A549 (cell line): ENCODE measurements at regions of chr15 and their contacts with region 1.

Region 1: DNA sequence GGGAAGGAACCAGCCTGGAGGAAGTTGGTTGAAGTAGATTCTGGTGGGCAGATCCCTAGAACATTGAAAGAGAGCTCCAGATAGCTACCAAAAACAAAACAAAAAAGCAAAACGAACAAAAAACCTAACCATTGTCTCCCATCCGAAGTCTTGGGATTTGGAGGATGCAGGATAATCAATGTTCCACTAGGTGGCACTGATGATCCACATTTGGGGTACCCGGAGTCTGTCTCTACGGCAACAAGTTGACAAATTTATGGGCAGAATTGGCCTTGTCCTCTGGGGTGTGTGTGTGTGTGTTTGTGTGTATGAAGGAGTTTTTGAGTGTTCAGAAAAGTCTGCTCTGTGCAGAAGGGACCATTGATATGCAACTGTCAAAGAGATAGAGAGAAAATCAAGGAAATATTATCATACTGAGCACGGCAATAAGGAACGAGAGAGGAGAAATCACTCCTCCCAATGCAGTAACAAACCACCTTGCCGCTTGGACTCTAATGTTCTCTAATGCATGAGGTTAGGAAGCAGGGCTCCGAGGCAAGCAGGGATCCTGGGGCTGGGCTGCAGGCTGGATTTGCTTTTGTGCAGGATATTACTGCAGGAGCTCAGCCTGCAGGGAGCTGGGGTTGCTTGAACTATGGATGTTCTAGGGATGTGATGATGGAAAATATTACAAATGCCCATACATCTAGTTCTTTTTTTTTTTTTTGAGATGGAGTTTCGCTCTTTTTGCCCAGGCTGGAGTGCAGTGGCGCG is 59.8 kb upstream of the KLHL25 start:
- DNase-seq: peak; percentile 76 to 88
- ATAC-seq: peak; percentile 64 to 81; a peak in 4 of 6 replicates
- H3K4me3 ChIP-seq: no peak overlapping the region
- H3K27ac ChIP-seq: no peak overlapping the region
- H3K4me1 ChIP-seq: no peaks in the 10 kb centered on the region
- CTCF ChIP-seq: peak; percentile 94
- EP300 ChIP-seq: no peak
- POLR2A ChIP-seq: no peak
- RAD21 ChIP-seq: peak; percentile 91 to 95

Region 2: DNA sequence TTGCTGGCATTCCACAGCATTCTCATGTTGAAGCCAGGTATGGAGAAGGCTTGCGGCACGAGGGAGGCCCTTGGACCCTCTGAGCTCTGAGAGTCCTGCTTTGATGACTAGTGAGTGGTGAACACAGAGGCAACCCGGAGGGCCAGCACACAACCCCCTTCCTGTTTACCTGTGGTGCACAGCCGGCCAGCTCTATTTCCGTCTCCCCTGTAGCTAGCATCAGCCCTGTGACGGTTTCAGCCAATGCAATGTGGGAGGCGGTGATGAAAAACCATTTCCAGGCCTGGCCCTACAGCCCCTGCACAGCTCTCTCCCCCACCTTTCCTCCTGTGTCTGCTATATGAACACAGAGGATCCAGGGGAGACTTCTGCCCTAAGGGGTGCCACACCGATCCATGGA is 17.0 kb after region 1 on chr15:
- CTCF ChIA-PET with region 1: interaction called, 12 read pairs
- POLR2A ChIA-PET with region 1: no interaction called
- DNase-seq: no peak
- ATAC-seq: no peak
- H3K4me3 ChIP-seq: no peak overlapping the region
- H3K27ac ChIP-seq: no peak overlapping the region
- H3K4me1 ChIP-seq: no peaks in the 10 kb centered on the region
- CTCF ChIP-seq: no peak
- EP300 ChIP-seq: no peak
- POLR2A ChIP-seq: no peak
- RAD21 ChIP-seq: no peak

Region 3: DNA sequence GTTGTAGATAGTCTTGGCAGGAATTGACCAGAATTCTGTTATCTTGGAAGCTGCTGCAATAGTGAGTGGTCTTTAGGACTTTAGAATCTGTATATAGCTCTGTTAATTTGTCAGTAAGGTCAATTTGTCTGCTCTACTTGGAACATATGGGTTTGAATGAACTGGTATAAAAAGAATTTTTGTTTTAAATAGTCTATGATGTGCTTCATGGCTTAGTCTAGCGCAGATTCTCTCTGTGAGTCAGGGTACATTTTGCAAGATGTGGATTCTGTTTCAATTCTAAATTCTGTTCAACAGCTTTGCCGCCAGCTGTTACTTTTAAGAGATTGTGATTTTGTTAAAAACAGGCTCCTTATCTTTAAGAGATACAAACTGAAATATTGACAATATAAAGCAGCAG is 89.3 kb after region 1 on chr15:
- CTCF ChIA-PET with region 1: no interaction called
- POLR2A ChIA-PET with region 1: no interaction called
- DNase-seq: no peak
- ATAC-seq: no peak
- H3K4me3 ChIP-seq: no peak overlapping the region
- H3K27ac ChIP-seq: no peak overlapping the region
- H3K4me1 ChIP-seq: no peaks in the 10 kb centered on the region
- CTCF ChIP-seq: no peak
- EP300 ChIP-seq: no peak
- POLR2A ChIP-seq: no peak
- RAD21 ChIP-seq: no peak